GM12878 (cell line): ENCODE measurements at regions of chr7 and their contacts with region 1.

Region 1: DNA sequence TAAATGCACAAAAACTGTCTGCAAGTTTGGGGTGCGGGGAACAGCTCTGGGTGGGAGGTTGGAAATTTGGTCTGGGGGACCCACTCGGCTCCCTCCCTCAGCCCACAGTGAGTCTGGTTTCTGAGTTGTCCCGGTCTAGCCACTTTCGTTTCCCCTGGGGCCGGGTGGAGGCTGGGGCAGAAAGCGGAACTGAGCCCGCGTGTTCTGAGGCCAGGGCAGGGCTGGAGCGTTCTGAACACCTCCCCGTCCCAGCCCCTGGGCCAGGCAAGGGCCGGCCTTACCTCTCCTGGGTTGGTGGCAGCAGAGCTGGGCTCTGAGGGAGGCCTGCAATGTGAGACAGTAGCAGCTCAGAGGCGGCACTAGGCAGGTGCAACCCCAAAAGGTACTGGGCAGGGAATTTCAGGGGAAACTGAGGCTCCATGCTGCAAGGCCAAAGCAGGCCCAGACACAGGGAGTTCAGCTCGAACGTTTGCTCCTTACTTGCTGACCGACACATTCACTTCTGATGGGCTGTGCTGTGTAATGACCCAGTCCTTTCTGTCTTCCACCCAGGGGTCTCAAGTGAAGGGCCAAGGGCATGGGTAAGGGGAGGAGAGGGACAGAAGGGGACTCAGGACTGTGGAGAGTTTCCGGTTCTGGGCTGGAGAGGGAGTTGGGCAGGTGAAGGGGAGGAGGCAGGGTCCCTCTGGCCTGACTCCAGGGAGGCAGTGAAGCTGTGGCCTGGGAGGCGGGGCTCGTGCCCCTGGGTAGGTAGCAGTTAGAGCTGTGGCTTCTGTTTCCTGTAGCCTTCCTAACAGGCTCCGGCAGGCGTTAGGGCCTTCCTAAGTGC is 3.0 kb downstream of the IRF5 start:
- DNase-seq: peak; percentile 66
- ATAC-seq: peak; percentile 72
- H3K4me3 ChIP-seq: peak overlapping the region; percentile 71
- H3K27ac ChIP-seq: peak overlapping the region; percentile 96
- H3K4me1 ChIP-seq: peaks cover 32% of the 10 kb centered on the region
- H3K27me3 ChIP-seq: no peaks in the 10 kb centered on the region
- CTCF ChIP-seq: no peak
- EP300 ChIP-seq: peak; percentile 61 to 78; a peak in 2 of 4 replicates
- POLR2A ChIP-seq: peak; percentile 81
- RAD21 ChIP-seq: no peak

Region 2: DNA sequence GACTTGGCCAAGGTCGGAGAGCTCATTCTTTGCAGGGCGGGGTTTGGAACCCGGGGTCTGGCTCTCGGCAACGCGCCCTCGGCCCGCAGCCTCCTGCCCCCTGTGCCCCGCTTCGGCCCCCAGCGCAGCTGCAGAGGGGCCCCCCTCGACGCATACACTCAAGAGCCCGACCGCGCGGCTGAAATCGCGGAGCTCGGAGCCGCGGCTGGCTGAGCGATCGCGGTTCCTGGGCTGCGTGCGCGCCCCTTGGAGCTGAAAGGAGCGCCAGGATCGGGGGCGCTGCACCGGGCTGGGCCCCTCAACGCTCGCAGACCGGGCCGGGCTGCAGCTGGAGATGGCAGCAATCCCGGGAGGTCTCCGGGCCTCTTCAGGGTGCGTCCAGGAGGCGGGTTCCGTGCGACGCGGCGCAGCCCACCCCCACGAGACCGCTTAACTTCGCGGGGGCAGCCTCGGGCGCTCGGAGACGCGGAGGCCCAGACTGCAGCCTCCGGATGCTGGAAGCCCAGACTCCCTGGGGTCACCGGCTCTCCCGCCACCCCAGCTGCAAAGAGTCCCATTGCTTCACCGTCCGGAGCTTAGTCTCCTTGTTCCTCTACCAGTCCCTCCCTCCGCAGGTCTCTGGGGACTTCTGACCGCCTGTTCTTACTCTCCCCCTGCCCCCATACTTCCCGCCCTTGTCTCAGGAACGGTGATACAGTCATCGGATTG is 836.5 kb before region 1 on chr7:
- CTCF ChIA-PET with region 1: no interaction called
- POLR2A ChIA-PET with region 1: no interaction called
- RAD21 ChIA-PET with region 1: no interaction called
- SMC1A ChIA-PET with region 1: no interaction called
- in situ Hi-C with region 1: no loop called
- intact Hi-C with region 1: no loop called
- DNase-seq: no peak
- ATAC-seq: peak; percentile 38
- H3K4me3 ChIP-seq: peak overlapping the region; percentile 71
- H3K27ac ChIP-seq: no peak overlapping the region
- H3K4me1 ChIP-seq: peaks cover 11% of the 10 kb centered on the region
- H3K27me3 ChIP-seq: no peaks in the 10 kb centered on the region
- CTCF ChIP-seq: no peak
- EP300 ChIP-seq: no peak
- POLR2A ChIP-seq: no peak; the same call in none of the 2 replicates
- RAD21 ChIP-seq: no peak

Region 3: GRCh38 chr7:128909625-128910257 is 31.0 kb before region 1 on chr7:
- CTCF ChIA-PET with region 1: interaction called, 10 read pairs
- POLR2A ChIA-PET with region 1: interaction called, 23 read pairs
- RAD21 ChIA-PET with region 1: interaction called, 20 read pairs
- SMC1A ChIA-PET with region 1: interaction called, 14 read pairs
- in situ Hi-C with region 1: no loop called
- intact Hi-C with region 1: loop called (anchors 2 kb)
- DNase-seq: no peak
- ATAC-seq: no peak
- H3K4me3 ChIP-seq: no peak overlapping the region
- H3K27ac ChIP-seq: no peak overlapping the region
- H3K4me1 ChIP-seq: peaks cover 14% of the 10 kb centered on the region
- H3K27me3 ChIP-seq: no peaks in the 10 kb centered on the region
- CTCF ChIP-seq: no peak
- EP300 ChIP-seq: no peak
- POLR2A ChIP-seq: no peak
- RAD21 ChIP-seq: no peak

Region 4: GRCh38 chr7:128954830-128955802 is 14.4 kb after region 1 on chr7:
- CTCF ChIA-PET with region 1: interaction called, 23 read pairs
- POLR2A ChIA-PET with region 1: interaction called, 107 read pairs
- RAD21 ChIA-PET with region 1: interaction called, 40 read pairs
- SMC1A ChIA-PET with region 1: interaction called, 37 read pairs
- in situ Hi-C with region 1: no loop called
- intact Hi-C with region 1: no loop called
- DNase-seq: no peak
- ATAC-seq: peak; percentile 87
- H3K4me3 ChIP-seq: peak overlapping the region; percentile 46; the same call in 1 of the 2 replicates
- H3K27ac ChIP-seq: peak overlapping the region; percentile 65
- H3K4me1 ChIP-seq: peaks cover 18% of the 10 kb centered on the region
- H3K27me3 ChIP-seq: no peaks in the 10 kb centered on the region
- CTCF ChIP-seq: no peak
- EP300 ChIP-seq: peak; percentile 74 to 79; a peak in 2 of 4 replicates
- POLR2A ChIP-seq: no peak
- RAD21 ChIP-seq: no peak

Region 5: GRCh38 chr7:129009437-129009836 is 68.7 kb after region 1 on chr7:
- CTCF ChIA-PET with region 1: interaction called, 11 read pairs
- POLR2A ChIA-PET with region 1: interaction called, 25 read pairs
- RAD21 ChIA-PET with region 1: interaction called, 32 read pairs
- SMC1A ChIA-PET with region 1: interaction called, 21 read pairs
- in situ Hi-C with region 1: no loop called
- intact Hi-C with region 1: no loop called
- DNase-seq: peak; percentile 70
- ATAC-seq: peak; percentile 90
- H3K4me3 ChIP-seq: no peak overlapping the region
- H3K27ac ChIP-seq: peak overlapping the region; percentile 93
- H3K4me1 ChIP-seq: peaks cover 70% of the 10 kb centered on the region
- H3K27me3 ChIP-seq: no peaks in the 10 kb centered on the region
- CTCF ChIP-seq: no peak
- EP300 ChIP-seq: peak; percentile 66 to 90
- POLR2A ChIP-seq: no peak
- RAD21 ChIP-seq: no peak

Region 6: GRCh38 chr7:129054438-129055293 is 114.0 kb after region 1 on chr7 and contains the start of gene TNPO3:
- CTCF ChIA-PET with region 1: interaction called, 5 read pairs
- POLR2A ChIA-PET with region 1: interaction called, 27 read pairs
- RAD21 ChIA-PET with region 1: interaction called, 13 read pairs
- SMC1A ChIA-PET with region 1: interaction called, 29 read pairs
- in situ Hi-C with region 1: no loop called
- intact Hi-C with region 1: loop called (anchors 2 kb)
- DNase-seq: peak; percentile 78
- ATAC-seq: peak; percentile 88
- H3K4me3 ChIP-seq: peak within 1 kb of the TSS; percentile 97
- H3K27ac ChIP-seq: peak within 1 kb of the TSS; percentile 93
- H3K4me1 ChIP-seq: peaks cover 5% of the 10 kb centered on the region
- H3K27me3 ChIP-seq: no peaks in the 10 kb centered on the region
- CTCF ChIP-seq: no peak
- EP300 ChIP-seq: no peak
- POLR2A ChIP-seq: peak; percentile 97
- RAD21 ChIP-seq: 0 out of 2 replicates have a peak, but pooled peaks have one; percentile 7
- polyA plus RNA-seq, gene TNPO3: 17.6 to 23.5 TPM

Region 7: GRCh38 chr7:129163875-129164544 is 223.3 kb after region 1 on chr7:
- CTCF ChIA-PET with region 1: interaction called, 11 read pairs
- POLR2A ChIA-PET with region 1: interaction called, 5 read pairs
- RAD21 ChIA-PET with region 1: interaction called, 5 read pairs
- SMC1A ChIA-PET with region 1: interaction called, 3 read pairs
- in situ Hi-C with region 1: no loop called
- intact Hi-C with region 1: no loop called
- DNase-seq: no peak
- ATAC-seq: peak; percentile 40
- H3K4me3 ChIP-seq: no peak overlapping the region
- H3K27ac ChIP-seq: no peak overlapping the region
- H3K4me1 ChIP-seq: peaks cover 57% of the 10 kb centered on the region
- H3K27me3 ChIP-seq: no peaks in the 10 kb centered on the region
- CTCF ChIP-seq: peak; percentile 61 to 78 (median 64)
- EP300 ChIP-seq: no peak
- POLR2A ChIP-seq: no peak
- RAD21 ChIP-seq: peak; percentile 60; the same call in 1 of the 2 replicates